Activated T-helper 2 cell treated with anti-CD3 and anti-CD28 coated beads, Interferon-gamma antibody, Interleukin-2, Interleukin-4, amounts not matched to agents 10 μg/mL and 5 μg/mL and 100 μg/mL, durations not matched to agents 14 hours and 24 hours and 36 hours (primary cell): ENCODE measurements at regions of chr3 and their contacts with region 1.

Region 1: DNA sequence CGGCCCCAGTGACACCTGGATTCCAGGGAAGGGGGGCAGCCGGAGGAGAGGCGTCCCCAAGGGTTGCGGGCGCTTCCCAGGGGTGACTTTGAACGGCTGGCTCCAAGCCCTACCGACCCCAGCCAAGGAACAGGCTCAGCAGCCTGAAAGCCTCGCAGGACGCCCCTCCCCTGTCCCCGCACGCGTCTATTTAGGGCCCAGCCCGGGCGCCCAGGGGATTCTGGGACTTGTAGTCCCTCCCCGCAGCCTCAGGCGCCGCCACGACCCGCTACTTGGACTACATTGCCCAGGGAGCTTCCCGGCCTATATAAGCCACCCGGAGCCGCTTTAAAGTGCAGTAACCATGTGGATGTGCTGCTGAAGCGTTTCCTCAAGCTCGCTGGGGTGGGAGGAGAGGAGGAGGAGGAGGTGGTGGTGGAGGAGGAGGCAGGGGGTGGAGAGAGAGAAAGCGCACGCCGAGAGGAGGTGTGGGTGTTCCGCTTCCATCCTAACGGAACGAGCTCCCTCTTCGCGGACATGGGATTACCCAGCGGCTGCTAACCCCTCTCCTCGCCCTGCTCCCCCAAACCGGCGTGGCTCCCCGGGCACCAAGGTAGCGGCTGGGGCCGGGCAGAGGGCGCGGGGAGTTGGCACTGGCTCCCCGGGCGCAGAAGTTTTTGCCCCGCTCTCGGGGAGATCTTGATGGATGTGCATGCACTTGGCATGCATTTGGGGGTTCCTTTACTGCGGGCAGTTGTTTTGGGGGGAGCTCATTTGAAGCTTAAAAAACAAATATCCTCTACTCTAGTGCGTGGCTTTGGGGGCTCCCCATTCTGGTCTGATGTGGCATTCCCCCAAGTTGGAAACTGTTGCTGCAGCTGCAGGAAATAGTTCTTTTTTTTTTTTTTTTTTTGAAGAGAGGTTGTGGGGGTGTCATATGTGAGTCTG is at the start of gene ITPR1:
- DNase-seq: peak; percentile 98
- H3K4me3 Mint-ChIP-seq: peak within 1 kb of the TSS; percentile 96
- H3K27ac Mint-ChIP-seq: peak within 1 kb of the TSS; percentile 87
- H3K4me1 Mint-ChIP-seq: peaks cover 44% of the 10 kb centered on the region
- H3K27me3 Mint-ChIP-seq: peaks cover 28% of the 10 kb centered on the region
- total RNA-seq, gene ITPR1: 117 and 137 TPM in 2 replicates

Region 2: GRCh38 chr3:4083225-4084011 is 409.9 kb before region 1 on chr3:
- intact Hi-C with region 1: no loop called
- DNase-seq: no peak
- H3K4me3 Mint-ChIP-seq: no peak overlapping the region
- H3K27ac Mint-ChIP-seq: no peak overlapping the region
- H3K4me1 Mint-ChIP-seq: no peaks in the 10 kb centered on the region
- H3K27me3 Mint-ChIP-seq: no peaks in the 10 kb centered on the region

Region 3: DNA sequence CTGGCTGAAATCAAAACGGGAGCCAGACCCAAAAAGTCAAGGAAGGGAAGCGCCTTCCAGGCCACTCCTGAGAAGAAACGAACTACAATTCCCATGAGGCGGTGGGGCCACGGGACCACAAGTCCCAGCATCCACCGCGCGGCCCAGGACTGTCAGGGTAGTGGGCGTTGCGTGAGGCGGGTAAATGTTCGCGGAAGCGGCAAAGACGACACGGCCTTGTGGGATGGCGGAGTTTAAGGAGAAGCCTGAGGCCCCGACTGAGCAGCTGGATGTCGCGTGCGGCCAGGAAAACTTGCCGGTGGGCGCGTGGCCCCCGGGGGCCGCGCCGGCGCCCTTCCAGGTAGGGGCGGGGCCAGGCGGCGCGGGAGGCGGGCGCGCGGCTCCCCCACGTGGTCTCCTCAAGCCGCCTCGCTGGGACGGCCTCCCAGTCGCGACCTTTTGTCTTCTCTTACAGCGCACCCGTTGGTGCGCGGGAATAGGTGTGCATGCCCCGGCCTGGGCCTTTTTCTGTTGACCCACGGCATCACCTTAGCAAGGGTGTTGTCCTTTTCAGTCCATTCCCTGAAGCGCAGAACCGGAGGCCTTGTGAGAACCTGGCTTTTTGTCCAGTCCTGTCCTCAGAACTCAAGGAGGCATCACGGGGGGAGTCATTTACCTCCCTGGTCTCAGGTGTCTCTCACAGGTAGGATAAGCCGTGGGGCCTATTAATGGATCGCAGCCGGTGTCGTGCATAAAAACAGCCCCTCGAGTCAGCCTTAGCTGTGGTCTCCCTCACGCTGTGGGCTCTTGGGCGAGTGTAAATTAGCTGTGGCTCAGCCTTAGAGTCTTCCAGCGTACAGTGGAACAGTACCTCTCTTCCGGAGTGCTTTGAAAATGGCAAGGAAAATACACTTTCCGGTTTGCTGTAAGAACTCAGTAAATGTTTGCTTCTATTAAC is 189.8 kb before region 1 on chr3 and contains the start of gene SETMAR:
- intact Hi-C with region 1: loop called (anchors 1 kb)
- DNase-seq: peak; percentile 75
- H3K4me3 Mint-ChIP-seq: peak within 1 kb of the TSS; percentile 90
- H3K27ac Mint-ChIP-seq: peak within 1 kb of the TSS; percentile 95
- H3K4me1 Mint-ChIP-seq: peaks cover 22% of the 10 kb centered on the region
- H3K27me3 Mint-ChIP-seq: peaks cover 4% of the 10 kb centered on the region
- total RNA-seq, gene SETMAR: 16.0 and 17.6 TPM in 2 replicates

Region 4: GRCh38 chr3:4406746-4407568 is 86.3 kb before region 1 on chr3:
- intact Hi-C with region 1: loop called (anchors 1 kb)
- DNase-seq: no peak
- H3K4me3 Mint-ChIP-seq: no peak overlapping the region
- H3K27ac Mint-ChIP-seq: peak overlapping the region; percentile 47
- H3K4me1 Mint-ChIP-seq: peaks cover 75% of the 10 kb centered on the region
- H3K27me3 Mint-ChIP-seq: no peaks in the 10 kb centered on the region

Region 5: GRCh38 chr3:4474683-4475490 is 18.4 kb before region 1 on chr3:
- intact Hi-C with region 1: loop called (anchors 2 kb)
- DNase-seq: no peak
- H3K4me3 Mint-ChIP-seq: no peak overlapping the region
- H3K27ac Mint-ChIP-seq: no peak overlapping the region
- H3K4me1 Mint-ChIP-seq: peaks cover 5% of the 10 kb centered on the region
- H3K27me3 Mint-ChIP-seq: peaks cover 9% of the 10 kb centered on the region

Region 6: DNA sequence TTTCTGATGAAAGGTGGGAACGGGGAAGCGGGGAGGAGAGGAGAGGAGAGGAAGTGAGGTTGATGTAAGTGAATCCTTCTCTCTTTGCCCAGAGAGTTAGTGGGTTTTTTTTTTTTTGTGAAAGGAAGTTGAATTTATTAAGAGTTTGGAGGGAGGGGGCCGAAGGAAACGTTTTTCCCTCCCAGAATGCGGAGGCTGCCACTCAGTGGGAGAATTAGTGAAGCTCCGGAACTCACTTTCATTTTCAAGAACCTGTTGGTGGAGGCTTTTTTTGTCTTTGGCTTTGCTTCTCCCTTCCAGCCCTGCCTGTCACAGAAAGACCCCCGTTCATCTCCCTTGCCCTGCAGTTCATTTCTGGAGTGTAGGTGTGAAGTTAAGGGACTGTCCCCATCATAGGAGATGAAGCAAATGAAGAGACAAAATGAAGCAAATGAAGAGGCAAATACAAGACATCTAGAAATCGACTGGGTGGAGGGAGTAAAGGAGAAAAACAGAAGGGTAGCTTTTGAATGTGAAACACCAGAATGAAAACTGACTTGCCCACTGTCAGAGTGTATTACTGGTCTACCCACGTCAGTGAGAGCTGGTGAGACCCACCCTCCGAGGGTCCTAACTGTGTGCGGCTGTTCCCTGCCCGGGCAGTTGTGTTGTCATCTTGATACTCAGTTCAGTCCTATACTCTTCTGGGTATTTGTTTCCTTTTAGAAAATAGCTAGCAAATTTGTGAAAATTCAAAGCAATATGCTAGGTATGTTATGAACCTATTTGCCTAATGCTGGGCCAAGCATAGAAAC is 91.4 kb after region 1 on chr3:
- intact Hi-C with region 1: loop called (anchors 5 kb)
- DNase-seq: no peak
- H3K4me3 Mint-ChIP-seq: peak overlapping the region; percentile 71
- H3K27ac Mint-ChIP-seq: peak overlapping the region; percentile 71
- H3K4me1 Mint-ChIP-seq: peaks cover 51% of the 10 kb centered on the region
- H3K27me3 Mint-ChIP-seq: no peaks in the 10 kb centered on the region

Region 7: GRCh38 chr3:5122030-5122740 is 628.9 kb after region 1 on chr3 and contains the start of gene ARL8B:
- intact Hi-C with region 1: loop called (anchors 10 kb)
- DNase-seq: peak; percentile 88
- H3K4me3 Mint-ChIP-seq: peak within 1 kb of the TSS; percentile 95
- H3K27ac Mint-ChIP-seq: peak within 1 kb of the TSS; percentile 83
- H3K4me1 Mint-ChIP-seq: peaks cover 28% of the 10 kb centered on the region
- H3K27me3 Mint-ChIP-seq: no peaks in the 10 kb centered on the region
- total RNA-seq, gene ARL8B: 37.9 and 40.6 TPM in 2 replicates